Activated CD8-positive, alpha-beta T cell treated with anti-CD3 and anti-CD28 coated beads for 36 hours (primary cell): ENCODE measurements at regions of chrX and their contacts with region 1.

Region 1: DNA sequence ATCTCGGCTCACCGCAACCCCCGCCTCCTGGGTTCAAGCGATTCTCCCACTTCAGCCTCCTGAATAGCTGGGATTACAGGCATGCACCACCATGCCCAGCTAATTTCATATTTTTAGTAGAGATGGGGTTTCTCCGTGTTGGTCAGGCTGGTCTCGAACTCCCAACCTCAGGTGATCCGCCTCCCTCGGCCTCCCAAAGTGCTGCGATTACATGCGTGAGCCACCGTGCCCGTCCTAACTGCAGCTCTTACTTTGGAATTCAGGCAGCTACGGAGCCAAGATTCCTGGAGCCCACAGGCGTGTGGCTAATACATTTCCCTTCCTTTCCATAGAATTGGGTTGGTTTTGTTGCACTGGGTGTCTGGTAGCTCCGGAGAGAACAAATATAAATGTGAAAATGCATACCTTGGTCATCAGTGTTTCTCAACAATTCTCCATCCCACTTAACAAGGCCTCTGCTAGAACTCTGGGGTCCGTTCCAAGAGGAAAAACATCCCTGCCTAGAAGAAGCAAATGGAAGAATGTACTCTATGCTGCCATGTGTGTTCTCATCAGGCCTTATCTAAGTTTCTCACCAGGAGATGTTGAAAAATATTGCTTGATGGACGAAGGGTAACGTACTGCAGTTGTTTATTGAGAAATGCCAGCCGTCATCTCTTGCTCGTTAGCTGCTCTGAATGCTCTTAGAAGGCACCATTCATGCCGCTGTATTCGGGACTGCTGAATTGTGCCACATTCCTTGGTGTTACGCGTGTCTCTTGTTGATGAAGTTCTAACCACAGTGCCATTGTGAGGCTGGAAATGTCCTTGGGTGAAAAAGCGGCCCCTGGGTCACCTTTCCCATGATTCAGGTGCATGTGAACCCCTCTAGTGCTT is 50.6 kb upstream of the CD99 start:
- DNase-seq: no peak
- ATAC-seq: no peak
- H3K4me3 Mint-ChIP-seq: no peak overlapping the region
- H3K27ac Mint-ChIP-seq: no peak overlapping the region
- H3K4me1 Mint-ChIP-seq: peaks cover 42% of the 10 kb centered on the region
- H3K27me3 Mint-ChIP-seq: no peaks in the 10 kb centered on the region
- CTCF ChIP-seq: no peak

Region 2: DNA sequence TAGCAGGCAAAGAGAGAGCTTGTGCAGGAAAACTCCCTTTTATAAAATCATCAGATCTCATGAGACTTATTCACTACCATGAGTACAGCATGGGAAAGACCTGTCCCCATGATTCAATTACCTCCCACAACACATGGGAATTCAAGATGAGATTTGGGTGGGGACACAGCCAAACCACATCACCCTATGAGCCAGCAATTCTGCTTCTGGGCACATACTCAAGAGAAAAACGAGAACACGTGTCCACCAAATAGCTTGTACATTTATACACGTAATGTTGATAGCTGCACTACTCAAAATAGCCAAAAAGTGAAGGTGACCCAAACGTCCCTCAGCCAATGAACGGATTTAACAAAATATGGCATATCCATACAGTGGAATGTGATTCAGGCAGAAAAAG is 45.3 kb before region 1 on chrX:
- CTCF ChIA-PET with region 1: no interaction called
- POLR2A ChIA-PET with region 1: no interaction called
- intact Hi-C with region 1: no loop called
- DNase-seq: no peak
- ATAC-seq: no peak
- H3K4me3 Mint-ChIP-seq: no peak overlapping the region
- H3K27ac Mint-ChIP-seq: no peak overlapping the region
- H3K4me1 Mint-ChIP-seq: peaks cover 3% of the 10 kb centered on the region
- H3K27me3 Mint-ChIP-seq: no peaks in the 10 kb centered on the region
- CTCF ChIP-seq: no peak

Region 3: DNA sequence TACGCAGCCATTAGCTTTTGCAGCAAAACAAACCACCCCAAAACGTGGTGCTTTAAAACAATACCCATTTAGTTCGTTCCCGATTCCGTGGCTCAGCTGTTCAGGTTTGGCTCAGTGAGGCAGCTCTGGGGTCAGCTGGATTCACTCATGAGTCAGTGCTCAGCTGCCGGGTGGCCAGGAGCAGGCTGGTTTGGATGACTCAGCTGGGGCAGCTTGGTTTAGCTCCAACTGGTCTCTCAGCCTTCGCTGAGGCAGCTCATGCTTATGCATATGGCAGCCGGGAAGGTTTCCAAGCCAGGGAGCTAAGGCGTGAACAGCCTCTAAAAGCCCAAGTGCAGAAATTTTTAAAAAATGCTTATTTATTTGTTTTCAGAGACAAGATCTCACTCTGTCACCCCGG is 37.3 kb after region 1 on chrX:
- CTCF ChIA-PET with region 1: no interaction called
- POLR2A ChIA-PET with region 1: no interaction called
- intact Hi-C with region 1: no loop called
- DNase-seq: no peak
- ATAC-seq: no peak
- H3K4me3 Mint-ChIP-seq: no peak overlapping the region
- H3K27ac Mint-ChIP-seq: no peak overlapping the region
- H3K4me1 Mint-ChIP-seq: no peaks in the 10 kb centered on the region
- H3K27me3 Mint-ChIP-seq: no peaks in the 10 kb centered on the region
- CTCF ChIP-seq: no peak

Region 4: GRCh38 chrX:2819345-2820135 is 179.0 kb after region 1 on chrX:
- CTCF ChIA-PET with region 1: no interaction called
- POLR2A ChIA-PET with region 1: no interaction called
- intact Hi-C with region 1: loop called (anchors 10 kb)
- DNase-seq: peak; percentile 20
- ATAC-seq: no peak
- H3K4me3 Mint-ChIP-seq: no peak overlapping the region
- H3K27ac Mint-ChIP-seq: no peak overlapping the region
- H3K4me1 Mint-ChIP-seq: peaks cover 3% of the 10 kb centered on the region
- H3K27me3 Mint-ChIP-seq: no peaks in the 10 kb centered on the region
- CTCF ChIP-seq: peak; percentile 31